ENCODE measurements at regions of chr2 and their contacts with region 1.

Region 1: GRCh38 chr2:162301151-162301804 is 17.2 kb downstream of the IFIH1 start:
- DNase-seq: no peak
- H3K4me3 ChIP-seq: no peak overlapping the region
- H3K27ac ChIP-seq: no peak overlapping the region
- H3K4me1 ChIP-seq: peaks cover 0 to 4% (median 0%) of the 10 kb centered on the region in 4 donors
- H3K27me3 ChIP-seq: no peaks in the 10 kb centered on the region
- CTCF ChIP-seq: peak; percentile 49 to 84 (median 70)
- EP300 ChIP-seq: no peak
- POLR2A ChIP-seq: no peak

Region 2: DNA sequence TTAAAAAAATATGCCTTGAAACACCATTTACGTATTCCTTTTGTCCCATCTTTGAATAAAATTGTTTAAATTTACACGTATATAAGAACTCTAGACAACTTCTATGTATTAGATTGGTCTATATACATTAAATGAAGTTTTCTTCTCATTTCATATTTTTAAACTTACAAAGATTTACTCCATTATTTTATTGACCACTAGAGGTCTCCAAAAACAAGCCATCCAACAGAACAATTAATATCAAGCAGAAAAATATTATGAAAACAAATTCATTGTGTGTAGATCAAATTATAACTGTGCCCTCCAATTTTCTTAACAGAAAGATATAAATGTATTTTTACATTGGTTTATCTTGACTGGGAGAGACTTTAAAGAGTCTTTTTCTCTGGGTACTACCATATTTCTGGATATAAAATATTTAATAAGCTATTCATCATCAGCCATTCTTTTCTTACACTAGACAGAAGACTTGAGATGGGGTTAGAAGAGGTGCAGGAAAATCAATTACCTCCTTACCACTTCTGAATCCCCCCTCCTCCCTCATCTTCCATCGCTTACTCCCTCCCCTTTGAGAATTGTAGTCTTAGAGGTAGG is 293.7 kb before region 1 on chr2:
- intact Hi-C with region 1: loop called (anchors 10 kb)
- DNase-seq: no peak
- H3K4me3 ChIP-seq: no peak overlapping the region
- H3K27ac ChIP-seq: no peak overlapping the region
- H3K4me1 ChIP-seq: peaks cover 0 to 5% (median 0%) of the 10 kb centered on the region in 4 donors
- H3K27me3 ChIP-seq: no peaks in the 10 kb centered on the region
- CTCF ChIP-seq: peak in 3 of 4 experiments; percentile 39 to 69 (median 45)
- EP300 ChIP-seq: no peak
- POLR2A ChIP-seq: no peak

Region 3: GRCh38 chr2:162153608-162154224 is 147.6 kb before region 1 on chr2:
- intact Hi-C with region 1: loop called (anchors 5 kb)
- DNase-seq: peak; percentile 67
- H3K4me3 ChIP-seq: no peak overlapping the region
- H3K27ac ChIP-seq: no peak overlapping the region
- H3K4me1 ChIP-seq: no peaks in the 10 kb centered on the region
- H3K27me3 ChIP-seq: no peaks in the 10 kb centered on the region
- CTCF ChIP-seq: peak in 1 of 4 experiments; percentile 8
- EP300 ChIP-seq: no peak
- POLR2A ChIP-seq: no peak

Region 4: DNA sequence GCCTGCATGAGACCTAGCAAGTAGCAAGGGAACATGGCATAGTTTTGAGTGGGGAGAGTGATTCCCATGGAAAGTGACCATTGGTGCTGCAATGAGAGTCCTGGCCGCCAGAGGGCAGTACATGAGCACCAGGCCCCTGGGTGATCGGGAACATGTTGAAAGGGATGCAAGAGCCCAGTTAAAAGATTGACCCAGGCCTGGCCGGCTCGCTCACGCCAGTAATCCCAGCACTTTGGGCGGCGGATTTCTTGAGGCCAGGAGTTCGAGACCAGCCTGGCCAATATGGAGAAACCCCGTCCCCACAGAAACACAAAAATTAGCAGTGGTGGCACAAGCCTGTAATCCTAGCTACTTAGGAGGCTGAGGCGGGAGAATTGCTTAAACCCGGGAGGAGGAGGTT is 80.2 kb before region 1 on chr2:
- intact Hi-C with region 1: loop called (anchors 1 kb)
- DNase-seq: peak; percentile 84
- H3K4me3 ChIP-seq: no peak overlapping the region
- H3K27ac ChIP-seq: no peak overlapping the region
- H3K4me1 ChIP-seq: no peaks in the 10 kb centered on the region
- H3K27me3 ChIP-seq: no peaks in the 10 kb centered on the region
- CTCF ChIP-seq: peak; percentile 54 to 91 (median 84)
- EP300 ChIP-seq: no peak
- POLR2A ChIP-seq: no peak

Measured in sigmoid colon (tissue), 7 donors.